PC-9 (cell line): ENCODE measurements at regions of chr12 and their contacts with region 1.

Region 1: DNA sequence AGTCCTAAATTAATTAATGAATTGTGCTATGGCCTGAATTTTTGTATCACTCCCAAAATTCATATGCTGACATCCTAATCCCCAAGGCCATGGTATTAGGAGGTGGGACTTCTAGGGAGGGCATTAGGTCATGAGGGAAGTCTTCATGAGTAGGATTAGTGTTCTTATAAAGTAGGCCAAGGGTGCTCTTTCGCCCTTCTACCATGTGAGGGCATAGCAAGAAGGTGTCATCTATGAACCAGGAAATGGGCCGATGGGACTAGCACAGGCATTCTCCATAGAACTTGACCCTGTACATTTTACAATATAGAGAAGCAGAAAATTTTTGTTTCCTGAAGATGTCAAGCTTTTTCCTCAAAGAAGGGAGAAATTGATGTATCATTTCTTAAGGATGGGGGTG is 12.5 kb downstream of the SYT10 start:
- DNase-seq: no peak
- H3K4me3 ChIP-seq: no peak overlapping the region
- H3K27ac ChIP-seq: no peak overlapping the region
- H3K4me1 ChIP-seq: no peaks in the 10 kb centered on the region
- H3K27me3 ChIP-seq: no peaks in the 10 kb centered on the region
- CTCF ChIP-seq: peak; percentile 30; the same call in 1 of the 2 replicates

Region 2: DNA sequence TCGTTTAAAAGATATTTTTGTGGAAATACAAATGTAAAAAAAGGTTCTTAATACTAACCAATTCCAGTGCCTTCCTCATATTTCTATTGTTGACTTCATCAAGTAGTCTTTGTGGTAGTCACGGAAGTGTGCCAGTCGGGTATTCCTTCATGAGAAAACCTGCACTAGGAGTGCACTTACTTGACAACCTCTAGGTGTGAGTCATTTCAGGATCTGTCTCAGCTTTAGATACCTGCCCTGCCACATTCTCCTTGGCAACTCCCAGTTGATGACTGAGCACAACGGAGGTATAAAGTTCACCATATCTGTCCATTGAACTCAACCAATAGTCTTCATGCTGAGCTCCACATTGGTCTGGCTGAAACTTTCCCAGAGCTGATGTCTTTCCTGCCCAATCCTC is 203.1 kb before region 1 on chr12:
- CTCF ChIA-PET with region 1: no interaction called
- POLR2A ChIA-PET with region 1: no interaction called
- intact Hi-C with region 1: no loop called
- DNase-seq: peak; percentile 67 to 96
- H3K4me3 ChIP-seq: no peak overlapping the region
- H3K27ac ChIP-seq: peak overlapping the region; percentile 73
- H3K4me1 ChIP-seq: peaks cover 18% of the 10 kb centered on the region
- H3K27me3 ChIP-seq: no peaks in the 10 kb centered on the region
- CTCF ChIP-seq: no peak

Region 3: DNA sequence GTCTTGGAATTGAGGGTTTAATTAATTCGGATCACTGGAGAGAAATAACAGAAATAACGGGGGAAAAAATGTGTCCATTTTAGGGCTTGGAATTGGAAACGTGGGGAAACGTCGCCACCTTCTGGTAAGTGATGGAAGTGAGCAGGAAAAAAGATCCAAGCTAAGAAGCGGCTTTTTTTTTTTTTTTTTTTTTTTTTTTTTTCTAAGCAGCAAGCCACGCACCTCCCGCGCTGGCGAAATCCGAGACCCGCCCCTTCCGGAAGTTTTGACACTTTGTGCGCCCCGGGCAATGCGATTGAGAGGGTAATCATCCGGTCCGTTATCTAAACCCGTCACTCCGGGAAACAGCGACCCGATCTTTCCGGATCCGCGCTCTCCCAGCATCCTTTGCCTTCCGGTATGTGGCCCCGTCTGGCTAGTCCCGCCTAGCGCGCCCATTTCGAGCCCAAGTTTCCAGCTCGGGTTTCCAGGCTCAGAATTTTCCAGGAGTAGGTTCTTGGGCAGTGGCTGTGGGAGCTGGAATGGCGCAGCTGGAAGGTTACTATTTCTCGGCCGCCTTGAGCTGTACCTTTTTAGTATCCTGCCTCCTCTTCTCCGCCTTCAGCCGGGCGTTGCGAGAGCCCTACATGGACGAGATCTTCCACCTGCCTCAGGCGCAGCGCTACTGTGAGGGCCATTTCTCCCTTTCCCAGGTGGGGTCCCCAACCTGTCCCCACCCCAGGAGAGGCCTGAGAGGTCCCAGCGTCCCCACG is 595.2 kb after region 1 on chr12 and contains the start of gene ALG10:
- CTCF ChIA-PET with region 1: no interaction called
- POLR2A ChIA-PET with region 1: no interaction called
- intact Hi-C with region 1: loop called (anchors 1 kb)
- DNase-seq: peak; percentile 93 to 99
- H3K4me3 ChIP-seq: peak within 1 kb of the TSS; percentile 76
- H3K27ac ChIP-seq: peak within 1 kb of the TSS; percentile 49
- H3K4me1 ChIP-seq: peaks cover 19% of the 10 kb centered on the region
- H3K27me3 ChIP-seq: no peaks in the 10 kb centered on the region
- CTCF ChIP-seq: peak; percentile 86
- total RNA-seq, gene ALG10: 21.5 and 23.3 TPM in 2 replicates